Breast epithelium (tissue), 4 donors: ENCODE measurements at regions of chr5 and their contacts with region 1.

Region 1: GRCh38 chr5:76305269-76305668 is 97.8 kb upstream of the IQGAP2 start:
- DNase-seq: no peak
- H3K4me3 ChIP-seq: no peak overlapping the region
- H3K27ac ChIP-seq: no peak overlapping the region
- H3K4me1 ChIP-seq: no peaks in the 10 kb centered on the region
- H3K27me3 ChIP-seq: no peaks in the 10 kb centered on the region
- CTCF ChIP-seq: no peak
- POLR2A ChIP-seq: no peak

Region 2: DNA sequence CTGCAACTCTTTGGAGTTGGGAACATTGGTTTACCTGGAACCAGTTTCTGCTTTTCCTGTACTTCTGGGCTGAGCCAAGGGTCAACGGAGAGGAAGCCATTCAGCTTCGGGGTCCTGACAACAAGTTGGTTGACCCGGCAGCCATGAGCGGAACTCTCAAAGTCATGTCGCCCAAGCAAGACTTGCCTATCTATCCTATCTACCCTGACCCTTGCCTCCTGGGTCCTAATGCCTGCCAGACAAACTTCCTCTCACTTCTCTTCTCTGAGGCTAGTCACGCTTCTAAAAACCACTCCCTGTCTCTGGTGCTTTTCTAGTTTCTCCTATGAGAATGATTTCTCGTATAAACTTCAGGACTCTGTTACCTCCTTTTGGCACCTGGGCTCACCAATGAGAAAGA is 602.9 kb after region 1 on chr5:
- intact Hi-C with region 1: no loop called
- DNase-seq: no peak
- H3K4me3 ChIP-seq: no peak overlapping the region
- H3K27ac ChIP-seq: no peak overlapping the region
- H3K4me1 ChIP-seq: no peaks in the 10 kb centered on the region
- H3K27me3 ChIP-seq: no peaks in the 10 kb centered on the region
- CTCF ChIP-seq: no peak
- POLR2A ChIP-seq: no peak

Region 3: GRCh38 chr5:77046416-77047073 is 741.3 kb after region 1 on chr5:
- intact Hi-C with region 1: loop called (anchors 5 kb)
- DNase-seq: no peak
- H3K4me3 ChIP-seq: no peak overlapping the region
- H3K27ac ChIP-seq: no peak overlapping the region
- H3K4me1 ChIP-seq: no peaks in the 10 kb centered on the region
- H3K27me3 ChIP-seq: no peaks in the 10 kb centered on the region
- CTCF ChIP-seq: no peak
- POLR2A ChIP-seq: no peak